WTC11 (cell line): ENCODE measurements at regions of chr10 and their contacts with region 1.

Region 1: DNA sequence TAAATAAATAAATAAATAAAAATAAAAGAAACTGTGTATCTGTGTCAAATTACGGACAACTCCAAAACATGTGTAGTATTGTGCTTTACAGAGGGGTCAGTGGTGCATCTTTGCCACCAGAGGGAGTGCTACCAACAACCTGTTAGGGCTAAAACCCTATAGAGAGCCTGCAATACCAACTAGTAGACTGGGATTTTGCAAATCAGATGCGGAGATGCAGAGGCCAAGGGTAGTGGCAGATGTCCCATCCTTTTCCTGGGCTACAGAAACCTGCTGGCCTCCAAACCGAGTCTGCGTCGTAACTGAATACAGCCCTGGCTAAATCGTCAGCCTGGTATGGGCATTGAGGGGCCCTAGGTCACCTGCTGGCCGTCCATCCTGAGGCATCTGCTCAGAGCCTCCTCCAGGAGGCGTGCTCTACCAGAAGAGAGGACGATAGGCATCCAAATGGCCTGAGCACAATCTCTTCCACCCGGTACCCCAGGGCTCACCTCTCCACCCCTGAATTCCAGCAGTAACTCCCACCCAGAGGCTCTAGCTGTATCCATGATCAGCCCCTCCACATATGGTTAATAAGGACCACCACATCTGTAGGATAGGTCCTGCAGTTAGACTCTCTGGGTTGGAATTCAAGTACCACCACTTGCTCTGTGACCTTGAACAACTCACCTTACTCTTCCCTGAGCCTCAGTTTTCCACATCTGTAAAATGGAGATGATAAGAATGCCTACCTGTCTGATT is 6.2 kb upstream of the RRP12 start:
- DNase-seq: peak; percentile 78
- ATAC-seq: peak; percentile 98
- H3K4me3 Mint-ChIP-seq: peak overlapping the region; percentile 56
- H3K27ac Mint-ChIP-seq: peak overlapping the region; percentile 76
- H3K4me1 Mint-ChIP-seq: peaks cover 3% of the 10 kb centered on the region; the same call in 1 of the 2 replicates
- H3K27me3 Mint-ChIP-seq: no peaks in the 10 kb centered on the region
- CTCF ChIP-seq: peak; percentile 68

Region 2: GRCh38 chr10:97297556-97298222 is 109.7 kb before region 1 on chr10:
- CTCF ChIA-PET with region 1: no interaction called
- POLR2A ChIA-PET with region 1: no interaction called
- DNase-seq: no peak
- ATAC-seq: no peak
- H3K4me3 Mint-ChIP-seq: no peak overlapping the region
- H3K27ac Mint-ChIP-seq: peak overlapping the region; percentile 10; the same call in 1 of the 2 replicates
- H3K4me1 Mint-ChIP-seq: peaks cover 2% of the 10 kb centered on the region
- H3K27me3 Mint-ChIP-seq: peaks cover 2% of the 10 kb centered on the region
- CTCF ChIP-seq: no peak

Region 3: DNA sequence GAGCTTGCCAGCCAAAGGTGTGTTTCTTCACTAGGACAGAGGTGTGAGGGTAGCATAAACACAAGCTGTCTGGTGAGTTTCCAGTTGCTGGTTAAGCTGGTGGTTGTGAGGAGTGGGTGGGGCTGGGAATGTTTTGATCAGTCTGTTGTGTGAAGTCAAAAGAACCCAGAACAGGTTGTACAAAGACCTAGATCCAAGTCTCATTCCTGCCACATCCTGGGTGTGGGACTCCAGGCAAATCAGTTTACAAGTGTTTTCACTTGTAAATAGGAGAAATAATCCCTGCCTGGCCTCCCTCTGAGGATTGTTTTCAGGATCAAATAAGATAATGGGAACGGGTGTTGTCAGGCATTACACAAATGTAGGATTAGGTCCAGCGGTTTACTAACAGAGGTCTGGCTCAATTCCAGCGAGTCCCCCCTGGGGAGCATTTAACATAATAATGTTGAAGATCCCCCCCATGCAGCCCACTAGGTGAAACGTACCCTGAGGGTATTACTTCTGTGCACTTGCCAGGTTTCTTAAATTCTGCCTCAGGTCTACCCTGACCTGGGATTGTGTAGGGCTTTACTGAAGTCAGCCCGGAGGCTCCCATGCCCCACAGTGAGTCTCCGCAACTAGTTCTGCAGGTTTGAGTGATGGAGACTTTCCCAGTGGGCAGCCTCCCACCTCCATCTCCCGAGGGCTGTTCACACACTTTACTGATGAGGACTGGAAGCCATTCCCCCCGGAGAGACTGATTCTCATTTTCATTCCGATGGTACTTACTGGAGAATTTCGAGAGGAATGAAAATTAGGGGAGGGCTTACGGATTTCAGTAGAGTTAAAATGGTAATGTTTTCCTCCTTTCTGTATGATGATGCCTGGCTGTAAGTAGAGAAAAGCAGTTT is 70.2 kb before region 1 on chr10:
- CTCF ChIA-PET with region 1: no interaction called
- POLR2A ChIA-PET with region 1: no interaction called
- DNase-seq: peak; percentile 64
- ATAC-seq: peak; percentile 62
- H3K4me3 Mint-ChIP-seq: peak overlapping the region; percentile 60
- H3K27ac Mint-ChIP-seq: peak overlapping the region; percentile 92
- H3K4me1 Mint-ChIP-seq: peaks cover 48% of the 10 kb centered on the region
- H3K27me3 Mint-ChIP-seq: no peaks in the 10 kb centered on the region
- CTCF ChIP-seq: no peak

Region 4: DNA sequence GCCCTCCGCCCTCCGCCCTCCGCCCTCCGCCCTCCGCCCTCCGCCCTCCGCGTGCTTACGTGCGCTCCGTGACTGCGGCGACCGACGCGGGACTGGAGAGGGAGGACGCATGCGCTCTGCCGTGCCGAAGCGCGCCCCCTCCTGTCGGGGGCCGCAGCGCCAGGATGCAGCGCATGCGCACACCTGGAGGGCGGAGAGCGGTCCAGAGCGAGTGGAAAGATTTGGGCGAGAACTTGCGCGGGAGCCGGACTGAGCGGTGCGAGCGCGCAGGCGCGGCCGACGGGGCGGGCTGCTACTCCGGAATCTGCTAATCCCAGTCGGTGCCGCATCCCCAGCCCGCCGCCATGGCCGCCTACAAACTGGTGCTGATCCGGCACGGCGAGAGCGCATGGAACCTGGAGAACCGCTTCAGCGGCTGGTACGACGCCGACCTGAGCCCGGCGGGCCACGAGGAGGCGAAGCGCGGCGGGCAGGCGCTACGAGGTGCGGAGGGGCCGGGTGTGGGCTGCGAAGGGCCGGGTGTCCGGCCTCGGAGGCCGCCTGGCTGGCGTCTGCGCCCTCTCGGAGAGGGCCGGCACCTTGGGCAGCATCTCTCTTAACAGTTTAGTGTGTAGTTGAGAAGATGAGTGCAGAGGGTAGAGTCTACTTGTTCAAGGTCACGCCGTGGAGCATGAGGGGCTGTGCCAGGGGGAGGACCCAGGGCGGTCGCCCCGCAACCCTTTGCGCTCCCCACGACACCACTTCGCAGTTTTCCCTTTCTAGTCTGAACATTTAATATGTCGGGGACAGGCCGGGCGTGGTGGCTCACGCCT is 18.8 kb after region 1 on chr10 and contains the start of gene PGAM1:
- CTCF ChIA-PET with region 1: interaction called, 31 read pairs
- POLR2A ChIA-PET with region 1: interaction called, 7 read pairs
- DNase-seq: peak; percentile 94
- ATAC-seq: peak; percentile 83
- H3K4me3 Mint-ChIP-seq: peak within 1 kb of the TSS; percentile 95
- H3K27ac Mint-ChIP-seq: peak within 1 kb of the TSS; percentile 95
- H3K4me1 Mint-ChIP-seq: peaks cover 22% of the 10 kb centered on the region
- H3K27me3 Mint-ChIP-seq: no peaks in the 10 kb centered on the region
- CTCF ChIP-seq: 0 out of 2 replicates have a peak, but pooled peaks have one; percentile 21
- total RNA-seq, gene PGAM1: 833 to 990 TPM (median 989 TPM) in 3 replicates

Region 5: GRCh38 chr10:97444212-97444611 is 36.8 kb after region 1 on chr10:
- CTCF ChIA-PET with region 1: interaction called, 14 read pairs
- POLR2A ChIA-PET with region 1: no interaction called
- DNase-seq: no peak
- ATAC-seq: no peak
- H3K4me3 Mint-ChIP-seq: peak overlapping the region; percentile 97
- H3K27ac Mint-ChIP-seq: no peak overlapping the region; the same call in 1 of the 2 replicates
- H3K4me1 Mint-ChIP-seq: peaks cover 18% of the 10 kb centered on the region
- H3K27me3 Mint-ChIP-seq: no peaks in the 10 kb centered on the region
- CTCF ChIP-seq: no peak